HEK293 (cell line): ENCODE measurements at regions of chr2 and their contacts with region 1.

Region 1: GRCh38 chr2:219294356-219295351 is 14.5 kb downstream of the PTPRN start:
- H3K4me3 ChIP-seq: peak overlapping the region; percentile 56
- H3K27ac ChIP-seq: peak overlapping the region; percentile 45; the same call in 1 of the 2 replicates
- H3K4me1 ChIP-seq: no peaks in the 10 kb centered on the region; the same call in 1 of the 2 replicates
- CTCF ChIP-seq: peak; percentile 88

Region 2: DNA sequence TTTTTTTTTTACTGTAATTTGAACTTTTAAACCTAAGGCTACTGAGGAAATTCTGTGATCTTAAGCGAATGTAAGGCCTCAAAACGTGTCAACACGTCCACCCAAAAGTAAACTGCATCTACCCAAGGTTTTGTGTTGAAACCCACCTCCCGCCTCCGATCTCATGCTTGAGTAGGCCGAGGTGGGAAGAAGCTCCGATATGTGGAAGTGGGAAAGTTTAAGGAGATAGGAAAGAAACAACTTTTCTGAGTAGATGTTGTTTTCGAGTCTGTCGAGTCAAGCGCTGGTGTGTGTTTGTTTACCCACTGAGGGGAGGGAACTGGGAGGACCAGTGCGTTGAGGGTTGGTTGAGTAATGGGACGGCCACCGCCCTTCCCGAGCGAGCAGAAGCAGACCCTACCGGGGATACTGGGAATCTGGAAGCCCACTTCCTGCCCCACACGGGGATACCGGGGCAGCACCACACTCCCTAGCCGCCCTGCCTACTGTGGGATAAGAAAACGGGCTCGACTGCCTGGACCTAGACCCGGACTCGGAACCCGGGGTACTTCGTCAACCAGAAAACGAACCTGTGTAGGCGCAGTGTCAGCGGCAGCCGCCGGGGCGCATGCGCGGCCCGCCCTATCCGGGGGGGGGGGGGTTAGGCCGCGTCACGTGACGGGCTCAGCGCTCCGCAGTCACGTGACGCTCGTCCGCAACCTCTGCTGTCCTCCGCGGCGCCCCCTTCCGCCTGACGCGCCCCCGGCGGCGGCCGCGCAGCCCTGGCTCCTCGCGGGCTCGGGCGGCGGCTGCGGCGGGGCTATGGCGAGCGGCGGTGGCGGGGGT is 116.9 kb before region 1 on chr2 and contains the start of gene RETREG2:
- CTCF ChIA-PET with region 1: interaction called, 101 read pairs
- POLR2A ChIA-PET with region 1: interaction called, 6 read pairs
- H3K4me3 ChIP-seq: peak within 1 kb of the TSS; percentile 78
- H3K27ac ChIP-seq: peak within 1 kb of the TSS; percentile 79
- H3K4me1 ChIP-seq: peaks cover 6% of the 10 kb centered on the region; the same call in 1 of the 2 replicates
- CTCF ChIP-seq: peak; percentile 20; the same call in 1 of the 2 replicates

Region 3: GRCh38 chr2:219229305-219230058 is 65.2 kb before region 1 on chr2 and contains the starts of genes ANKZF1 and ATG9A:
- CTCF ChIA-PET with region 1: interaction called, 65 read pairs
- POLR2A ChIA-PET with region 1: interaction called, 8 read pairs
- H3K4me3 ChIP-seq: peak within 1 kb of the TSS; percentile 83
- H3K27ac ChIP-seq: peak within 1 kb of the TSS; percentile 81
- H3K4me1 ChIP-seq: peaks cover 4% of the 10 kb centered on the region; the same call in 1 of the 2 replicates
- CTCF ChIP-seq: no peak

Region 4: GRCh38 chr2:219253753-219254590 is 40.7 kb before region 1 on chr2 and contains the start of gene TUBA4A:
- CTCF ChIA-PET with region 1: interaction called, 39 read pairs
- POLR2A ChIA-PET with region 1: interaction called, 7 read pairs
- H3K4me3 ChIP-seq: peak within 1 kb of the TSS; percentile 55
- H3K27ac ChIP-seq: no peak within 1 kb of the TSS
- H3K4me1 ChIP-seq: peaks cover 4% of the 10 kb centered on the region; the same call in 1 of the 2 replicates
- CTCF ChIP-seq: 0 out of 2 replicates have a peak, but pooled peaks have one; percentile 6

Region 5: GRCh38 chr2:219362524-219363164 is 68.0 kb after region 1 on chr2:
- CTCF ChIA-PET with region 1: interaction called, 10 read pairs
- POLR2A ChIA-PET with region 1: no interaction called
- H3K4me3 ChIP-seq: no peak overlapping the region
- H3K27ac ChIP-seq: no peak overlapping the region
- H3K4me1 ChIP-seq: peaks cover 7% of the 10 kb centered on the region
- CTCF ChIP-seq: no peak